Activated T-helper 1 cell treated with anti-CD3 and anti-CD28 coated beads, Interleukin-12 subunit alpha, Interleukin-12 subunit beta, Interleukin-2, Interleukin-4 antibody, amounts not matched to agents 30 ng/mL and 10 ng/mL and 1 ng/mL, durations not matched to agents 14 hours and 24 hours and 36 hours (primary cell): ENCODE measurements at regions of chr1 and their contacts with region 1.

Region 1: GRCh38 chr1:61318319-61319125 is 236.2 kb downstream of the NFIA start:
- DNase-seq: peak; percentile 34
- H3K4me3 Mint-ChIP-seq: peak overlapping the region; percentile 53
- H3K27ac Mint-ChIP-seq: peak overlapping the region; percentile 90
- H3K4me1 Mint-ChIP-seq: peaks cover 32% of the 10 kb centered on the region
- H3K27me3 Mint-ChIP-seq: no peaks in the 10 kb centered on the region

Region 2: DNA sequence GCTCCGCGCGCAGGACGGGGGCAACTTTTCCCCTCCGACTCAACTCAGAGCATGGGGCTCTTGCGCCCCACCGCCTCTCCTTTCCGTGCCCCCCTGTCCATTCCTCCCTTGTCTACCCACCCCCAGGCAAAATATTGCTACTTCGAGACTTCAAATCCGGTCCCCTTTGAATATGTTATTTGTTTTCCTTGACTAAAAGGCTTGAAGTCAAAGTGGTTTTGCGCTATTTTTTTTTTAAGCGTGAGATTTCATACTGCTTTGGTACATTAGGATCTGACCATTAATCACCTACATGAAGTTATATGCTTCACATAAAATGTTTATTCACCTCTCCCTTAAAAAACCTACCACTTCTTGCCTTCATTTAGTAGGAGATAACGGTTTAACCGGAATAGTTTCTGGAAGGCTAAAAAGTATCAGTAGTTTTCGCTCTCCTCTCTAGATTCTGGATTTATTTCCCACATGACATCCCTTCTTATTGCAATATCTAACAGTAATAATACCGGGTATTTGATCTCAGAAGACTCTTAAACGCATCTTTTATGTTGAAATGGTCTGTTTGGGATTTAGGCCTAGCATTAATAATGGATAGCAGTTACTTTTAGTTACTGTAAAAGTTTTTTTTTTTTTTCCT is 234.6 kb before region 1 on chr1:
- intact Hi-C with region 1: loop called (anchors 2 kb)
- DNase-seq: no peak
- H3K4me3 Mint-ChIP-seq: peak overlapping the region; percentile 76
- H3K27ac Mint-ChIP-seq: peak overlapping the region; percentile 34
- H3K4me1 Mint-ChIP-seq: peaks cover 30% of the 10 kb centered on the region
- H3K27me3 Mint-ChIP-seq: peaks cover 69% of the 10 kb centered on the region

Region 3: GRCh38 chr1:61301824-61302657 is 16.5 kb before region 1 on chr1:
- intact Hi-C with region 1: loop called (anchors 1 kb)
- DNase-seq: peak; percentile 16
- H3K4me3 Mint-ChIP-seq: peak overlapping the region; percentile 3
- H3K27ac Mint-ChIP-seq: peak overlapping the region; percentile 84
- H3K4me1 Mint-ChIP-seq: peaks cover 34% of the 10 kb centered on the region
- H3K27me3 Mint-ChIP-seq: peaks cover 2% of the 10 kb centered on the region

Region 4: GRCh38 chr1:61782771-61783170 is 464.2 kb after region 1 on chr1:
- intact Hi-C with region 1: loop called (anchors 5 kb)
- DNase-seq: peak; percentile 70
- H3K4me3 Mint-ChIP-seq: no peak overlapping the region
- H3K27ac Mint-ChIP-seq: peak overlapping the region; percentile 78
- H3K4me1 Mint-ChIP-seq: peaks cover 57% of the 10 kb centered on the region
- H3K27me3 Mint-ChIP-seq: no peaks in the 10 kb centered on the region